ENCODE measurements at regions of chr7 and their contacts with region 1.

Region 1: GRCh38 chr7:50418086-50418515 is 32.0 kb downstream of the FIGNL1 start:
- DNase-seq: peak; percentile 14
- H3K4me3 ChIP-seq: no peak overlapping the region
- H3K27me3 ChIP-seq: peaks cover 4% of the 10 kb centered on the region
- CTCF ChIP-seq: peak; percentile 94

Region 2: GRCh38 chr7:50206453-50207250 is 211.4 kb before region 1 on chr7:
- CTCF ChIA-PET with region 1: interaction called, 14 read pairs
- POLR2A ChIA-PET with region 1: no interaction called
- DNase-seq: no peak
- H3K4me3 ChIP-seq: no peak overlapping the region
- H3K27me3 ChIP-seq: no peaks in the 10 kb centered on the region
- CTCF ChIP-seq: no peak

Region 3: DNA sequence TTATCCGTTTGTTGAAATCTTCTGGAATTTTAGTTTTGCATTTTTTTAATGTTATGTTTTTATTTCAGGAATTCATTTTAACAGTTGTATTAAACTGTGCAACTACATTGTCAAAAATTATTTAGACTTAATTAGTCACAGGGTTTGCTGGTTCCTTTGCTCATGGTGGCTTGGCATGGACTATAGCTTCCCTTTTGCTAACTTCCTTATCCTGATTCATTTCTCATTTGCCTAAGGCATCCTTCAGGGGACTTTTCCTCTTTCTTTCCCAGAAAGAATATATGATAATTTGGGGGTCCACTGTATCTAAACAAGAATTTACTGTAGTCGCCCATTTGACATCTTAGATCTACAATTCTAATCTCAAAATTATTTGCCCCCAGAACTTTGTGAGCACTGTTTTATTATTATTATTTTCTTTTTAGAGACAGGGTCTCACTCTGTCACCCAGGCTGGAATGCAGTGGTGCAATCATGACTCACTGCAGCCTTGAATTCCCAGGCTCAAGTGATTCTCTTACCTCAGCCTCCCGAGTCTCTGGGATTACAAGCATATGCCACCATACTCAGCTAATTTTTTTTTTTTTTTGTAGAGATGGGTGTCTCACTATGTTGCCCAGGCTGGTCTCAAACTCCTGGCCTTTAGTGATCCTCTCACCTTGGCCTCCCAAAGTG is 18.2 kb after region 1 on chr7:
- CTCF ChIA-PET with region 1: interaction called, 14 read pairs
- POLR2A ChIA-PET with region 1: no interaction called
- DNase-seq: peak; percentile 21
- H3K4me3 ChIP-seq: no peak overlapping the region
- H3K27me3 ChIP-seq: no peaks in the 10 kb centered on the region
- CTCF ChIP-seq: no peak

Region 4: GRCh38 chr7:50455658-50456057 is 37.6 kb after region 1 on chr7:
- CTCF ChIA-PET with region 1: no interaction called
- POLR2A ChIA-PET with region 1: no interaction called
- DNase-seq: no peak
- H3K4me3 ChIP-seq: no peak overlapping the region
- H3K27me3 ChIP-seq: peaks cover 3% of the 10 kb centered on the region
- CTCF ChIP-seq: no peak